ENCODE measurements at regions of chr15 and their contacts with region 1.

Region 1: DNA sequence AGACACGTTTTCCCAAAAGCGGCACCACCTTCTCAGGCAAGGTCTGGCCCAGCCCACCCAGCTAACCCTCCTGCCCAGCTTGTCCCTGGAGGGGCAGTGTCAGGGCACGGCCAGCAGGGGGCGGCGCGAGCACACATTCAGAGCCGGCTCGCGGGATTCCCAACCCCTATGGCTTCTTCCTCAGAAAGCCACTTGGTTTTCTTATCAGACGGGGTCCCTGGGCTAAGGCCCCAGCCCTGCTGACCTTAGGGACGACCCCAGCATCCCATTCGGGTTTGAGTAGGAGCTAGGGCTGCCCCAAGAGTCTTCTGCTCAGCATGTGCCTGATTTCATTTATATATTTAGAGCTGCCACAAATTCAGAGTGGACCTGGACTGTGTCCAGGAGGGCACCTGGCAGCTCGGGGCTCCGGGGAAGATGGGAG is 14.5 kb downstream of the RLBP1 start:
- DNase-seq: peak; percentile 55 to 97 (median 82)

Region 2: DNA sequence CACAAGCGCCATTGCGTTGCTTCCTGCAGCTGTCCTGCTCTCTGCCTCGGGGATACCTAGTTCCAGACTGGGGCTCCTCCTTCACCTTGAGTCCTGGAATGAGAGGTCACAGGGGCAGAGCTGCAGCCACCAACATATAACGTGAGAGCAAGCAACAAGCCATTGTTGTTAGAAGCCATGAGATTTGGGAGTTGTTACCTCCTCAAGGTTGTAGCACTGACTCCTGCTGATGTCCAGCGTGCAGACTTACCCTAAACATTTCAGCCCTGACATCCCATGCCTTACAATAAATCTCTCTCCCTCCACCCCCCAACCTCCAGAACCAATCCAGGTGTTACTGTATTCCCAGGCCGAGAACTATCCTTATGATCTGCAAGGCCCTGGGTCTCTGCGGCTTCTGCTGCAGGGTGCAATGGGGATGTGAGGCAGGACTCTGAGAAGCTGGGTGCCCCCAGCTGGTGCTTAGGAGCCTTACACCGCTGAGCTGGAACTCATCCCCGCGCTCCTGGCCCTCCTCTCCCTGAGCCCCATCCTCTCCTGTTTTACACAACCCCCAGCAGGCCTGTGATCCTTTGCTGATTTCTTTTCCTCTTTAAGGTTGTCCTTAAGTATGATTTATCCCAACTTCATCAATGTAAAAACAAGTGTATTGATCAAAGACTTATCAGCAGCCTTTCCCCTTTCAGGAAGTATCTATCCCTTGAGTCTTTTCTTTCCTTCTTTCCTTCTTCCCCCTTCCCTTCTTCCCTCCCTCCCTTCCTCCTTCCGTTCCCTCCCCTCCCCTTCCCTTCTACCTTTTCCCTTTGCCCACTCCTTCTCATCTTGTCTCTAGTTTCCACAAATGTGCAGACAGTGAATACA is 202.8 kb before region 1 on chr15:
- intact Hi-C with region 1: no loop called
- DNase-seq: peak in 4 of 10 donors; percentile 10 to 85 (median 30)

Region 3: GRCh38 chr15:89243691-89244471 is 37.0 kb after region 1 on chr15 and contains the start of gene FANCI:
- intact Hi-C with region 1: loop called (anchors 5 kb)
- DNase-seq: peak; percentile 92 to 99 (median 96)

Region 4: GRCh38 chr15:89299896-89300295 is 93.0 kb after region 1 on chr15:
- intact Hi-C with region 1: loop called (anchors 1 kb)
- DNase-seq: no peak

Region 5: DNA sequence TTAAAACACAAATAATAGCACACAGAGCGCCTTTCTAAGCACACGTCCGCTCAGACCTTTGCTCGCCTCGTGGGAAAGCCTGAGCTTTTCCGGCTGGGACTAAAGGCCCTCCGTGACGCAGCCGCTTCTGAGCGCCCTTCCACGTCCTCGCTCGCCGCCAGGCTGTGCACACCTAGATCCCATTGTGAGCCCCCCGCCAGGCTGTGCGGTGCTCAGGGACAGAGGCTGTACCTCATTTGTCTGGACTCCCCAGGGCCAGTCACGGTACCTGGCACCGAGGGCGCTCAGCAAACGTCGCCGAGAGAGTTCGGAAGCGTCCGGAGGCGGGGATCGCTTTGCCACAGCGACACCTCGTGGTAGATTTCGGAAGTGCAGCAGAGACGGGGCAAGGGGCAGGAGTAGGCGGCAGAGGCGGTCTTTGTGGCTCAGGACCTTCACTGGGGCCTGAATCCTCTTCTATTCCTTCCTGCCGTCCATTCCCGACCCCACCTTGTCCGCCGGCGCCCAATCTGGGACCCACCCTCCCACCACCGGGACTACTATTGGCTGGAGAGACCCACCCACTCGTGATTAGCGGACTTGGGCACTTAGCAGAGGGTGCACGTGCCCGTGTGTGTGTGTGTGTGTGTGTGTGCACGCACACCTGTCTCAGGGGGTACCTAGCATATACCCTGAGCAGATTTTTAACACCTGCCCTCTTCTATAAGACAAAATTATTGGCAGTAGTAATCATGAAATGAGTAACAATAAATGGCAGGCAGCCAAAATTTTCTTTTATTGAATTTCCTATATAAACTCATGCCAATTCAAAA is 223.8 kb after region 1 on chr15:
- intact Hi-C with region 1: loop called (anchors 10 kb)
- DNase-seq: peak; percentile 75 to 99 (median 93)

Measured in posterior cingulate gyrus (tissue), 11 donors.